Caco-2 (cell line): ENCODE measurements at regions of chr12 and their contacts with region 1.

Region 1: GRCh38 chr12:62891805-62892549 is 43.0 kb downstream of the PPM1H start:
- DNase-seq: peak; percentile 75 to 76
- H3K4me3 ChIP-seq: no peak overlapping the region
- H3K4me3 Mint-ChIP-seq: peak overlapping the region; percentile 56
- H3K27ac Mint-ChIP-seq: peak overlapping the region; percentile 92
- H3K4me1 ChIP-seq: peaks cover 74% of the 10 kb centered on the region
- H3K4me1 Mint-ChIP-seq: peaks cover 58% of the 10 kb centered on the region
- H3K27me3 ChIP-seq: no peaks in the 10 kb centered on the region
- H3K27me3 Mint-ChIP-seq: no peaks in the 10 kb centered on the region
- CTCF ChIP-seq: no peak

Region 2: GRCh38 chr12:62458626-62459025 is 433.4 kb before region 1 on chr12:
- CTCF ChIA-PET with region 1: no interaction called
- POLR2A ChIA-PET with region 1: no interaction called
- intact Hi-C with region 1: no loop called
- DNase-seq: no peak
- H3K4me3 ChIP-seq: no peak overlapping the region
- H3K4me3 Mint-ChIP-seq: no peak overlapping the region
- H3K27ac Mint-ChIP-seq: no peak overlapping the region
- H3K4me1 ChIP-seq: no peaks in the 10 kb centered on the region
- H3K4me1 Mint-ChIP-seq: peaks cover 7% of the 10 kb centered on the region
- H3K27me3 ChIP-seq: no peaks in the 10 kb centered on the region
- H3K27me3 Mint-ChIP-seq: no peaks in the 10 kb centered on the region
- CTCF ChIP-seq: no peak

Region 3: GRCh38 chr12:62841846-62842245 is 50.1 kb before region 1 on chr12:
- CTCF ChIA-PET with region 1: no interaction called
- POLR2A ChIA-PET with region 1: interaction called, 3 read pairs
- intact Hi-C with region 1: loop called (anchors 1 kb)
- DNase-seq: no peak
- H3K4me3 ChIP-seq: no peak overlapping the region
- H3K4me3 Mint-ChIP-seq: no peak overlapping the region
- H3K27ac Mint-ChIP-seq: peak overlapping the region; percentile 22
- H3K4me1 ChIP-seq: peaks cover 79% of the 10 kb centered on the region
- H3K4me1 Mint-ChIP-seq: peaks cover 41% of the 10 kb centered on the region
- H3K27me3 ChIP-seq: no peaks in the 10 kb centered on the region
- H3K27me3 Mint-ChIP-seq: no peaks in the 10 kb centered on the region
- CTCF ChIP-seq: no peak

Region 4: GRCh38 chr12:62908667-62909066 is 16.7 kb after region 1 on chr12:
- CTCF ChIA-PET with region 1: no interaction called
- POLR2A ChIA-PET with region 1: no interaction called
- intact Hi-C with region 1: loop called (anchors 1 kb)
- DNase-seq: no peak
- H3K4me3 ChIP-seq: no peak overlapping the region
- H3K4me3 Mint-ChIP-seq: peak overlapping the region; percentile 22
- H3K27ac Mint-ChIP-seq: peak overlapping the region; percentile 32
- H3K4me1 ChIP-seq: peaks cover 66% of the 10 kb centered on the region
- H3K4me1 Mint-ChIP-seq: peaks cover 51% of the 10 kb centered on the region
- H3K27me3 ChIP-seq: no peaks in the 10 kb centered on the region
- H3K27me3 Mint-ChIP-seq: no peaks in the 10 kb centered on the region
- CTCF ChIP-seq: no peak

Region 5: DNA sequence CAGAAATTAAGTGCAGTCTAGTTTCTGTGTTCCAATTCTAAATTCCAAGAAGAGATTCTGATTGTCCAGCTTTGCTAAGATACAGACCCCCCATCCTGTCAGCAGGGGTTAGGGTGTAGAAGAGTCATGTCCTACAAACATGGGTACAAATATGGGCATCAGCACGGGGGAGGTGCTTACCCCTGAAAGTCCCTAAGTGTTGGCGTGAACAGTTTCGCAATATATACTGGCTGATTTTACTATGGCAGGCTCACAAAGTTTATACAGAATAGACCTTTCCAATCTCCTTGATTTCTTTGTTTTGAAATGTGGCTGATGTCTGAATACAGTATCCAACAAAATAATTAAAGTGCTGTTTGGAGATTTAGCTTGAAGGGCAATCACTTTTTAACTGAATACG is 114.6 kb after region 1 on chr12:
- CTCF ChIA-PET with region 1: no interaction called
- POLR2A ChIA-PET with region 1: no interaction called
- intact Hi-C with region 1: loop called (anchors 1 kb)
- DNase-seq: peak; percentile 48 to 55
- H3K4me3 ChIP-seq: no peak overlapping the region
- H3K4me3 Mint-ChIP-seq: peak overlapping the region; percentile 4
- H3K27ac Mint-ChIP-seq: peak overlapping the region; percentile 87
- H3K4me1 ChIP-seq: peaks cover 59% of the 10 kb centered on the region
- H3K4me1 Mint-ChIP-seq: peaks cover 34% of the 10 kb centered on the region
- H3K27me3 ChIP-seq: no peaks in the 10 kb centered on the region
- H3K27me3 Mint-ChIP-seq: no peaks in the 10 kb centered on the region
- CTCF ChIP-seq: no peak

Region 6: DNA sequence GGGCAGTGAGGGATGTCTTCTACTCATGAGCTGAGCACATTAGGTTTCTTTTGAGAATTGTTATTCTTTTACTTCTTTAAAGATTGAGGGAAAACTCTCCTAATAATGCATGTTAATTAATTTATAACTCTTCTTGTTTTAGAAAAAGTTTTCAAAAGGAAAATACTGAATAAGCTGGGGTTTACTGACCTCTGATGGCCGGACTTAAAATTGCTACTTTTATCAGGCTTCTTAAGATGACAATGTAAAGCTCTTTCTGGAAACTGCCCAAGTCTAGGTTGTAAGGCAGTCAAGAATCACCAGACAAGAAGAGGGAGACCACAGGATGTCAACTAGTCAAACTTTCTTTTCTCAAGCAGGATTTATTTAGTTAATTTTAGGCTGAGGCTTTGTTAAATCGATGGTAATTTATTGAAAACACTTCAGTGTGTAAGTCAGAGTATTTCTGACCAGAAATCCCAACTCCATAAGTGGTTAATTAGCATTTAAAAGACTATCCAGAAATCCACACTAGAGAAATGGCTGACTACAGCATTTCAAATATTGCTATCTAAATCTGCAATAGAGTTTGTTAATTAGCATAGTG is 177.0 kb after region 1 on chr12:
- CTCF ChIA-PET with region 1: interaction called, 10 read pairs
- POLR2A ChIA-PET with region 1: no interaction called
- intact Hi-C with region 1: loop called (anchors 1 kb)
- DNase-seq: peak in 1 of 2 experiments; percentile 39
- H3K4me3 ChIP-seq: no peak overlapping the region
- H3K4me3 Mint-ChIP-seq: no peak overlapping the region
- H3K27ac Mint-ChIP-seq: no peak overlapping the region
- H3K4me1 ChIP-seq: peaks cover 26% of the 10 kb centered on the region
- H3K4me1 Mint-ChIP-seq: peaks cover 33% of the 10 kb centered on the region
- H3K27me3 ChIP-seq: no peaks in the 10 kb centered on the region
- H3K27me3 Mint-ChIP-seq: no peaks in the 10 kb centered on the region
- CTCF ChIP-seq: peak; percentile 61 to 64